Endothelial cell of umbilical vein (primary cell): ENCODE measurements at regions of chr3 and their contacts with region 1.

Region 1: GRCh38 chr3:185733980-185734724 is 90.7 kb downstream of the IGF2BP2 start:
- DNase-seq: peak; percentile 87
- H3K4me3 ChIP-seq: no peak overlapping the region
- H3K27ac ChIP-seq: peak overlapping the region; percentile 100
- H3K4me1 ChIP-seq: peaks cover 93% of the 10 kb centered on the region
- H3K27me3 ChIP-seq: no peaks in the 10 kb centered on the region
- CTCF ChIP-seq: peak; percentile 56 to 62
- POLR2A ChIP-seq: no peak

Region 2: DNA sequence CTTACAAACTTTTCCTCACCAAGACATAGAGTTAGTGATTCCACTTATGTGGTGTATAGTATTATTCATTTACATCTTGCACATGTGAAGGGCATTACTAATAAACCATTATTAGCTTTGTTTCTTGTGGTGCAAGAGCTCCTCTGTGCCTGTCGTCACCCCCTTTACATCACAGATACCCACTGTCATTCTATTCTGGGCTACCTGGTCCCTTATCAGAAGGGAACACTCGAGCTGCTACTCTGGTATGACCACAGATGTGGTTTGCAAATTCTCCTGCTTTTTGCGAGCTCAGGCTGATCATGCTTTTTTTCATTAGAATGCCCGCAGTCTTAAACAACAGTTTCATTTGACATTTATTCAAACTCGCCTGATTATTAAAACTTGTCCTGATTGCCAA is 162.0 kb before region 1 on chr3:
- CTCF ChIA-PET with region 1: no interaction called
- POLR2A ChIA-PET with region 1: no interaction called
- dilution Hi-C with region 1: no loop called
- intact Hi-C with region 1: no loop called
- DNase-seq: no peak
- H3K4me3 ChIP-seq: no peak overlapping the region
- H3K27ac ChIP-seq: no peak overlapping the region
- H3K4me1 ChIP-seq: no peaks in the 10 kb centered on the region
- H3K27me3 ChIP-seq: no peaks in the 10 kb centered on the region
- CTCF ChIP-seq: no peak
- POLR2A ChIP-seq: no peak

Region 3: DNA sequence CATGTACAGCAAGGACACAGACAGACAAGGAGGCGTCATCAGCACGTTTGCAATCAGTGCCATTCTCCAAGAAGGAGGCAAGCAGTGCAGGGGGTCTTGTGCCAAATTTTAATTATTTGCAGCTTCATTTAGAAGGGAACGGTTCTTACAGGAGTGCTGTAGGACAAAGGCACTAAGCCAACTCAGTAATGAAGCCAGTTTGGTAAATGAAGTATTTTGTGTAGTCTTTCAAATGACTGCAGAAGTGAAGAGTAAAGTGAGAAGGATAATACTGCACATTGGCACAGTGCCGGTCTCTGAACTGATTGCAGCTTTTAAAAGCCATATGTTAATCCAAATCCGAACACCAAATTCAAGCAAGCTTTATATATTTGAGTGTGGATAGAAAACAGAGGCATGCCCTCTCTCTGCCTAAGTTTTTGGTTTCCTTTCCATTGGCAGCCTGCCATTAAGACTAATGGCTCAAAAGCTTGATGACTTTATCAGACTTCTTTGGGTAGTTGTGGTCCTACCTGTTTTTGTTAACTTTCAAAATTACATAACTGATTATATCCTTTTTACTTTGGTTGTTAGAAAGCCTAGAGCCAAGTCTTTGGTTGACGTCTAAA is 46.8 kb before region 1 on chr3:
- CTCF ChIA-PET with region 1: interaction called, 9 read pairs
- POLR2A ChIA-PET with region 1: no interaction called
- dilution Hi-C with region 1: no loop called
- intact Hi-C with region 1: loop called (anchors 1 kb)
- DNase-seq: no peak
- H3K4me3 ChIP-seq: no peak overlapping the region
- H3K27ac ChIP-seq: peak overlapping the region; percentile 93
- H3K4me1 ChIP-seq: peaks cover 19% of the 10 kb centered on the region
- H3K27me3 ChIP-seq: no peaks in the 10 kb centered on the region
- CTCF ChIP-seq: no peak
- POLR2A ChIP-seq: no peak

Region 4: DNA sequence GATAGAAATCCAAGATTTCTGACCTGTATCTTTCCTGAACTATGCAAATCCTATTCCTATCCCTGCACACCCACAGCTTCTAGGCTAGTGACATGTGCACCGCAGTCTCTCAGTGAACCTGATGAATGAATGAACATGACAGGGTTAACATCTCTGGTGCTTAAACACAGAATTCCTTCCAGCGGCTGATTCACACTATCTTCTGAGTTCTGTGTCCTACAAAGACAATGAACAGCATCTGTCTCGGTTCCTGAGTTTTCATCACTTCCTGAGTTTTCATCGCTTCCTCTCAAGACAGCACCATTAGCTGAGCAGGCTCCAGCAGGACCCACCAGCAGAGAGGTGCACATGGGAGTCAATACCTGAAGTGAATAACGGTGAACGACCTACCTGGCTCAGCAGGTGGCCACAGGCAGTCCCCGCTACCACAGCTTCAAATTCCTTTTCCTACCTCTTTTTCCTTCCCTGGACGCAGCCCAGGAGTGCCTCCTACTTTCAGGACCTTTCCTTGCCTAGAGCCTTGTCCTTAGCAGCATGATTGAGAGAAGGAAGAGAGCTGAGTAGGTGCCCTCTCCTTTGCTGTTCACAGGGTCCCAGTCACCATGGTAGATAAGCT is 22.8 kb before region 1 on chr3:
- CTCF ChIA-PET with region 1: interaction called, 15 read pairs
- POLR2A ChIA-PET with region 1: no interaction called
- dilution Hi-C with region 1: no loop called
- intact Hi-C with region 1: no loop called
- DNase-seq: peak; percentile 48
- H3K4me3 ChIP-seq: no peak overlapping the region
- H3K27ac ChIP-seq: peak overlapping the region; percentile 61
- H3K4me1 ChIP-seq: peaks cover 36% of the 10 kb centered on the region
- H3K27me3 ChIP-seq: no peaks in the 10 kb centered on the region
- CTCF ChIP-seq: no peak
- POLR2A ChIP-seq: no peak

Region 5: GRCh38 chr3:185744997-185745843 is 11.1 kb after region 1 on chr3:
- CTCF ChIA-PET with region 1: interaction called, 38 read pairs
- POLR2A ChIA-PET with region 1: interaction called, 4 read pairs
- dilution Hi-C with region 1: no loop called
- intact Hi-C with region 1: loop called (anchors 1 kb)
- DNase-seq: peak; percentile 81
- H3K4me3 ChIP-seq: no peak overlapping the region
- H3K27ac ChIP-seq: peak overlapping the region; percentile 79
- H3K4me1 ChIP-seq: peaks cover 29% of the 10 kb centered on the region
- H3K27me3 ChIP-seq: no peaks in the 10 kb centered on the region
- CTCF ChIP-seq: no peak
- POLR2A ChIP-seq: peak; percentile 55

Region 6: GRCh38 chr3:185865247-185865646 is 131.1 kb after region 1 on chr3:
- CTCF ChIA-PET with region 1: no interaction called
- POLR2A ChIA-PET with region 1: no interaction called
- dilution Hi-C with region 1: no loop called
- intact Hi-C with region 1: no loop called
- DNase-seq: no peak
- H3K4me3 ChIP-seq: no peak overlapping the region
- H3K27ac ChIP-seq: no peak overlapping the region
- H3K4me1 ChIP-seq: no peaks in the 10 kb centered on the region
- H3K27me3 ChIP-seq: peaks cover 9 to 12% of the 10 kb centered on the region in 2 experiments
- CTCF ChIP-seq: no peak
- POLR2A ChIP-seq: no peak

Region 7: GRCh38 chr3:185937689-185938463 is 203.7 kb after region 1 on chr3 and contains the start of gene TRA2B:
- CTCF ChIA-PET with region 1: interaction called, 3 read pairs
- POLR2A ChIA-PET with region 1: no interaction called
- dilution Hi-C with region 1: no loop called
- intact Hi-C with region 1: loop called (anchors 1 kb)
- DNase-seq: peak; percentile 99
- H3K4me3 ChIP-seq: peak within 1 kb of the TSS; percentile 41 to 98 (median 97)
- H3K27ac ChIP-seq: peak within 1 kb of the TSS; percentile 76
- H3K4me1 ChIP-seq: peaks cover 26% of the 10 kb centered on the region
- H3K27me3 ChIP-seq: peaks cover 0 to 3% of the 10 kb centered on the region in 2 experiments
- CTCF ChIP-seq: peak in 1 of 2 donors; percentile 38
- POLR2A ChIP-seq: peak; percentile 99
- total RNA-seq, gene TRA2B: 199 and 214 TPM in 2 replicates